ENCODE measurements at regions of chr7 and their contacts with region 1.

Region 1: GRCh38 chr7:131945313-131945911 is 389.0 kb upstream of the PODXL start:
- DNase-seq: peak; percentile 46 to 96 (median 70)

Region 2: GRCh38 chr7:131959106-131959812 is 13.8 kb after region 1 on chr7:
- intact Hi-C with region 1: no loop called
- DNase-seq: no peak

Region 3: DNA sequence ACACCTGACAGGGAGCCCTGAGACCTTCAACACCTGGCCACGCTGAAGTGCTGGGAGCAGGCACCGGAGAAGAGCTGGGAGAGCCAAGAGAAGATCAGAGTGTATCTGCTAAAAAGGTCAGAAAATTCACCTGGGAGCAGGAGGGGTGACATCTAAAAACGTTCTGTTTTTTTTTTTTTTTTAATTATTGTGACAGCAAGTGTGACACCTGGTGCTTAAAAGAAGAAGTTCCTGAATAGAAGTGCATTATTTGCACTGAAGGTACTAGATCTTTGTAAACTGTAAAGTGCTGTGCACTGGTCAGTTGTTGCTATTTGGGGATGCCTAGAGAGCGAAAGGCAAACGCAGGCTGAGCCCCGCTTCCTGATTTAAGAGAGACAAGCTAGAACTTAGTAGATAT is 208.8 kb after region 1 on chr7:
- intact Hi-C with region 1: loop called (anchors 10 kb)
- DNase-seq: no peak

Measured in posterior cingulate gyrus (tissue), 11 donors.